Psoas muscle (tissue), 8 donors: ENCODE measurements at regions of chr1 and their contacts with region 1.

Region 1: DNA sequence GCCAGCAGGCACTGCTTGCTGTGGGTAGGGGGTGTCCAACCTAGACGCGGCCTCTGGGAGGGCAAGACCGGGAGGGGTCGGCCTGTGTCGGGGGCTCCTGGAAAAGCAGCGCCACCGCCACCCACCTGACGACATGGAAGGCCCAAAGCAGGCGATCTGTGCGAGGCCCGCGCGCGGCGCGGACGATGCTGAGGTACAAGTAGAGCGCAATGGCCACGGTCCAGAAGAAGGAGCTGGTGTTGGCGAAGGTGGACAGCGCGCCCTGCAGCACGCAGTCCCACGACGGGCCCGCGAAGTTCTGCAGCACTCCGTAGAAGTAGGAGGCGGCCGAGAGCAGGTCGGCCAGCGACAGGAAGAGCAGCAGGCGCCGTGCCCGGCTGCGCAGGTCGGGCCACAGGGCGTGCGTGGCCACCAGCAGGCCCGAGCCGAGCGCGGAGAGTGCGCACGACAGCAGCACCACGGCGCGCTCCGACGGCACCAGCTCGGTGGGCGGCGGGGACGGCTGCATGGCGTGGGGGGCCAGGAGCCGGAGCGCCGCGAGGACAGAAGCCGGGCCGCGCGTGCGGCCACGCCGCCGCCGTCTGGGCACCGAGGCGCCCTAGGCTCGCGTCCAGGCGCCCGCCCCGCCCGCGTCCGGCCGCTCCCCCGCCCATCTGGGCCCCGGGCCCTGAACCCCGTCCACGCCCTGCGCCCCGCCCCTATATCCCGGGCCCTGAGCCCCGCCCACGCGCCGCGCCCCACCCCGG is at the start of gene GPR157:
- DNase-seq: peak; percentile 92 to 95
- ATAC-seq: peak; percentile 85 to 93 (median 92)
- H3K4me3 ChIP-seq: peak within 1 kb of the TSS; percentile 87
- H3K27ac ChIP-seq: peak within 1 kb of the TSS; percentile 93
- H3K4me1 ChIP-seq: peaks cover 37% of the 10 kb centered on the region
- H3K27me3 ChIP-seq: no peaks in the 10 kb centered on the region
- CTCF ChIP-seq: peak; percentile 16
- total RNA-seq, gene GPR157: 13.1 to 49.5 (median 33.4) TPM

Region 2: DNA sequence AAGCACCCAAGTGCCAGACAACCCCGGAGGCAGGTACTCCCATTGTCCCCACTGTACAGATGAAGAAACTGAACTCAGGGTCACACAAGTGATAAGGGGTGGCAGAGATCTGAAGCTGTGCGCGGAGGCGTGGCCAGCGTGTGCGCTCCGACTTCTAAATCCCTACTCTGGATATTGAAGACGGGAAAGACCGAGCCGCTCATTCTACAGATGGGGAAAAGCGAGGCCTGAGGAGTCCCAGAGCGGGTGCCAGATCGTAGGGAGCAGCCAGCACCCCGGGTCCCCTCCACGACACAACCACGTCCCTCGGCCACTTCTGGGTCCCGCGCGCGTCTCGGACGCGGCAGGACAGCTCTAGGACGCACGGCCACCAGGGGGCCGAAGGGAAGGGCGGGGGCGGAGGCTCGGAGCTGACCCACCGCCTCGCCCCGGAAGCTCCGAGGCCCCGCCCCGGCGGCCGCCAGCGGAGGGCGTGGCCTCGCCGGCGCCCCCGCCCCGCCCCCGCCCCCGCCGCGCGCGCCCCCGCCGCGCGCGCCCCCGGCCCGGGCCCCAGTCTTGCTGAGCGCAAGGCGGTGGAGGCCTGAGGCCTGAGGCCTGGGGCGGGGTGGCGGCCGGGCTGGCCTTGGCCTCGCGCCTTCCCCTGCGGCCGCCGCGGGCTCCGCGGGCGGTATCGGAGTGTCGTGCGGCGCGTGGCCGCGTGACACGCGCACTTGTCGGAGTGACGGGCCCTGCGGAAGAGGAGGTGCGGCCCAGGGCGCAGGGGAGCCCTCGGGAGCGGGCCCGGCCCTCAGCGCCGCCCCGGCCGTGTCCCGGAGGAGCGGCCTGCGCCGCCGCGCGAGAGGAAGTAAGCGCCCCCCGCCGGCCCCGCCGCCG is 105.8 kb after region 1 on chr1 and contains the start of gene H6PD:
- intact Hi-C with region 1: loop called in 1 of 2 experiments (anchors 5 kb)
- DNase-seq: peak; percentile 91 to 95
- ATAC-seq: peak; percentile 62 to 73 (median 70)
- H3K4me3 ChIP-seq: peak within 1 kb of the TSS; percentile 71
- H3K27ac ChIP-seq: peak within 1 kb of the TSS; percentile 90
- H3K4me1 ChIP-seq: peaks cover 67% of the 10 kb centered on the region
- H3K27me3 ChIP-seq: no peaks in the 10 kb centered on the region
- CTCF ChIP-seq: peak; percentile 62
- total RNA-seq, gene H6PD: 21.0 to 56.8 (median 37.0) TPM